ENCODE measurements at regions of chr9 and their contacts with region 1.

Region 1: GRCh38 chr9:130940693-130941576 is 1.9 kb upstream of the FIBCD1 start:
- DNase-seq: peak; percentile 28 to 37
- ATAC-seq: peak; percentile 65 to 79
- H3K4me3 ChIP-seq: no peak overlapping the region
- H3K27ac ChIP-seq: no peak overlapping the region
- H3K4me1 ChIP-seq: peaks cover 0 to 7% of the 10 kb centered on the region in 2 donors
- H3K27me3 ChIP-seq: peaks cover 48 to 70% (median 67%) of the 10 kb centered on the region in 3 donors
- CTCF ChIP-seq: peak; percentile 59 to 85 (median 80)
- POLR2A ChIP-seq: no peak

Region 2: GRCh38 chr9:130707225-130707976 is 233.5 kb before region 1 on chr9:
- in situ Hi-C with region 1: loop called in 2 of 4 experiments (anchors 5 to 10 kb)
- intact Hi-C with region 1: loop called (anchors 1 kb)
- DNase-seq: no peak
- ATAC-seq: peak; percentile 24 to 25
- H3K4me3 ChIP-seq: no peak overlapping the region
- H3K27ac ChIP-seq: no peak overlapping the region
- H3K4me1 ChIP-seq: peaks cover 0 to 3% of the 10 kb centered on the region in 2 donors
- H3K27me3 ChIP-seq: no peaks in the 10 kb centered on the region
- CTCF ChIP-seq: peak; percentile 63 to 84 (median 69)
- POLR2A ChIP-seq: no peak

Region 3: GRCh38 chr9:130770679-130771442 is 170.1 kb before region 1 on chr9:
- in situ Hi-C with region 1: no loop called
- intact Hi-C with region 1: loop called (anchors 5 kb)
- DNase-seq: no peak
- ATAC-seq: peak; percentile 74 to 77
- H3K4me3 ChIP-seq: no peak overlapping the region
- H3K27ac ChIP-seq: no peak overlapping the region
- H3K4me1 ChIP-seq: peaks cover 10 to 15% of the 10 kb centered on the region in 2 donors
- H3K27me3 ChIP-seq: no peaks in the 10 kb centered on the region
- CTCF ChIP-seq: peak; percentile 58 to 67 (median 60)
- POLR2A ChIP-seq: no peak

Measured in gastrocnemius medialis (tissue), 4 donors.